ENCODE measurements at regions of chr1 and their contacts with region 1.

Region 1: GRCh38 chr1:40224040-40224439 is 23.7 kb upstream of the TMCO2 start:
- DNase-seq: no peak
- H3K4me3 ChIP-seq: no peak overlapping the region
- H3K4me3 Mint-ChIP-seq: no peak overlapping the region
- H3K27ac ChIP-seq: no peak overlapping the region
- H3K27ac Mint-ChIP-seq: no peak overlapping the region
- H3K4me1 ChIP-seq: no peaks in the 10 kb centered on the region
- H3K4me1 Mint-ChIP-seq: no peaks in the 10 kb centered on the region
- H3K27me3 ChIP-seq: no peaks in the 10 kb centered on the region
- H3K27me3 Mint-ChIP-seq: no peaks in the 10 kb centered on the region
- CTCF ChIP-seq: no peak

Region 2: DNA sequence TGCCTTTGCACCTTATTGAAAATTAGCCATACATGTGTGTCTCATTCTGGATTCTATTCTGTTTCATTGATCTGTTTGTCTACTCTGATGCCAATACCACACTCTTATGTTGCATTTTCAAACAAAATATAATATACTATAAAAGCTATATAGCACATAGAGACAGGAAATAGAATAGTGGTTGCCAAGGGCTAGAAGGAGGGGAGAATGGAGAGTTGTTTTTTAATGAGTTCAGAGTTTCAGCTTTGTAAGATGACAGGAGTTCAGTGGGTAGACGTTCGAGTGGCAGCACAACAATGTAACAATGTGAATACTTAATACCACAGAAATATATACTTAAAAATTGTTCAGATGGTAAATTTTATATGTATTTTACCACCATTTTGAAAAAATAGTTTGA is 45.8 kb before region 1 on chr1:
- intact Hi-C with region 1: loop called in 1 of 2 experiments (anchors 10 kb)
- DNase-seq: no peak
- H3K4me3 ChIP-seq: no peak overlapping the region
- H3K4me3 Mint-ChIP-seq: no peak overlapping the region
- H3K27ac ChIP-seq: no peak overlapping the region
- H3K27ac Mint-ChIP-seq: no peak overlapping the region
- H3K4me1 ChIP-seq: no peaks in the 10 kb centered on the region
- H3K4me1 Mint-ChIP-seq: peaks cover 32% of the 10 kb centered on the region
- H3K27me3 ChIP-seq: no peaks in the 10 kb centered on the region
- H3K27me3 Mint-ChIP-seq: peaks cover 0 to 2% (median 0%) of the 10 kb centered on the region in 3 donors
- CTCF ChIP-seq: no peak

Region 3: GRCh38 chr1:40344597-40344996 is 120.6 kb after region 1 on chr1:
- intact Hi-C with region 1: no loop called
- DNase-seq: peak; percentile 82 to 87 (median 86)
- H3K4me3 ChIP-seq: peak overlapping the region; percentile 56 to 88 (median 84)
- H3K4me3 Mint-ChIP-seq: peak overlapping the region; percentile 78 to 96
- H3K27ac ChIP-seq: peak overlapping the region; percentile 84 to 93
- H3K27ac Mint-ChIP-seq: peak overlapping the region; percentile 88 to 98 (median 96)
- H3K4me1 ChIP-seq: peaks cover 66 to 77% of the 10 kb centered on the region in 2 donors
- H3K4me1 Mint-ChIP-seq: peaks cover 76% of the 10 kb centered on the region
- H3K27me3 ChIP-seq: no peaks in the 10 kb centered on the region
- H3K27me3 Mint-ChIP-seq: peaks cover 0 to 13% (median 1%) of the 10 kb centered on the region in 3 donors
- CTCF ChIP-seq: no peak